Activated CD4-positive, alpha-beta memory T cell treated with anti-CD3 and anti-CD28 coated beads for 36 hours (primary cell): ENCODE measurements at regions of chr9 and their contacts with region 1.

Region 1: GRCh38 chr9:132160802-132161742 is 786 bp upstream of the NTNG2 start:
- DNase-seq: peak; percentile 72
- H3K4me3 Mint-ChIP-seq: peak overlapping the region; percentile 82
- H3K27ac Mint-ChIP-seq: no peak overlapping the region
- H3K4me1 Mint-ChIP-seq: peaks cover 8% of the 10 kb centered on the region
- H3K27me3 Mint-ChIP-seq: peaks cover 41% of the 10 kb centered on the region

Region 2: GRCh38 chr9:131982671-131983239 is 178.3 kb before region 1 on chr9:
- CTCF ChIA-PET with region 1: no interaction called
- POLR2A ChIA-PET with region 1: no interaction called
- intact Hi-C with region 1: no loop called
- DNase-seq: no peak
- H3K4me3 Mint-ChIP-seq: no peak overlapping the region
- H3K27ac Mint-ChIP-seq: no peak overlapping the region
- H3K4me1 Mint-ChIP-seq: peaks cover 5% of the 10 kb centered on the region
- H3K27me3 Mint-ChIP-seq: no peaks in the 10 kb centered on the region

Region 3: GRCh38 chr9:132144708-132145365 is 16.2 kb before region 1 on chr9:
- CTCF ChIA-PET with region 1: interaction called, 3 read pairs
- POLR2A ChIA-PET with region 1: no interaction called
- intact Hi-C with region 1: loop called (anchors 2 kb)
- DNase-seq: peak; percentile 65
- H3K4me3 Mint-ChIP-seq: no peak overlapping the region
- H3K27ac Mint-ChIP-seq: peak overlapping the region; percentile 73
- H3K4me1 Mint-ChIP-seq: peaks cover 18% of the 10 kb centered on the region
- H3K27me3 Mint-ChIP-seq: peaks cover 67% of the 10 kb centered on the region